H1 (cell line): ENCODE measurements at regions of chr5 and their contacts with region 1.

Region 1: GRCh38 chr5:177022384-177023308 is at the start of gene ZNF346:
- DNase-seq: peak; percentile 70 to 93
- H3K4me3 ChIP-seq: peak within 1 kb of the TSS; percentile 49 to 75 (median 74)
- H3K27ac ChIP-seq: peak within 1 kb of the TSS; percentile 13; the same call in 1 of the 2 replicates
- H3K4me1 ChIP-seq: peaks cover 0 to 4% (median 0%) of the 10 kb centered on the region in 4 experiments; a peak in 3 of 7 replicates
- H3K27me3 ChIP-seq: no peaks in the 10 kb centered on the region
- CTCF ChIP-seq: peak; percentile 55 to 66 (median 64)
- EP300 ChIP-seq: no peak
- POLR2A ChIP-seq: peak in 1 of 2 experiments; percentile 87; a peak in 2 of 3 replicates
- RAD21 ChIP-seq: peak; percentile 1 to 32; a peak in 1 of 4 replicates
- total RNA-seq, gene ZNF346: 19.9 and 20.2 TPM in 2 replicates

Region 2: DNA sequence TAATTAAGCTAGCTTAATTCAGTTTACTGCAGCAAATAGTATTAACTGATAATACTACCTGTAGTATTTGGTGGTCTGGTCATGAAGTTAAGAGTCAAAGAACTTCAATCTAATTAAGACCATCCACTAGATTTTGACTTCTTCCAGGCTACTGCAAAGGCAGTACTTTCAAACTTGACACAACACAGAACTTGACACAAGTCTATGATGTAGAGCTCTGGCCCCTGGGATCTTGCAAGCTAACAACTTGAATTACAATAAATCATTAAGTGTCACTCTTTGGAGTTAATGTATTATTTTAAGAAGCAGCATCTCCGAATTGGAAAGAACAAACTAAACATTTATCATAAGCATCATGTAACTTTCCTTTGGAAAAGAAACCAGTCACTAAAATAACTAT is 57.0 kb before region 1 on chr5:
- CTCF ChIA-PET with region 1: no interaction called
- POLR2A ChIA-PET with region 1: no interaction called
- DNase-seq: no peak
- H3K4me3 ChIP-seq: no peak overlapping the region
- H3K27ac ChIP-seq: no peak overlapping the region
- H3K4me1 ChIP-seq: no peaks in the 10 kb centered on the region
- H3K27me3 ChIP-seq: no peaks in the 10 kb centered on the region
- CTCF ChIP-seq: no peak
- EP300 ChIP-seq: no peak
- POLR2A ChIP-seq: no peak
- RAD21 ChIP-seq: no peak

Region 3: DNA sequence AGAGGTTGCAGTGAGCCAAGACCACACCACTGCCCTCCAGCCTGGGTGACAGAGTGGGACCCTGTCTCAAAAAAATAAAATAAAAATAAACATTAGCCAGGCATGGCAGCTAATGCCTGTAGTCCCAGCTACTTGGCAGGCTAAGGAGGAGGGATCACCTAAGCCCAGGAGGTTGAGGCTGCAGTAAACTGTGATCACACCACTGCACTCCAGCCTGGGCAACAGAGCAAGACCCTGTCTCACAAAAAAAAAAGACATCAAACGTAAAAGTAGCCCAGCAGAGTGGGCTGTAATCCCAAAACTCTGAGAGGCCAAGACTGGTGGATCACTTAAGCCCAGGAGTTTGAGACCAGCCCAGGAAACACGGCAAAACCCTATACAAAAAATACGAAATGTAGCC is 35.1 kb before region 1 on chr5:
- CTCF ChIA-PET with region 1: no interaction called
- POLR2A ChIA-PET with region 1: no interaction called
- DNase-seq: no peak
- H3K4me3 ChIP-seq: no peak overlapping the region
- H3K27ac ChIP-seq: no peak overlapping the region
- H3K4me1 ChIP-seq: no peaks in the 10 kb centered on the region
- H3K27me3 ChIP-seq: no peaks in the 10 kb centered on the region
- CTCF ChIP-seq: no peak
- EP300 ChIP-seq: no peak
- POLR2A ChIP-seq: no peak
- RAD21 ChIP-seq: no peak

Region 4: GRCh38 chr5:177043958-177044357 is 21.3 kb after region 1 on chr5:
- CTCF ChIA-PET with region 1: interaction called, 10 read pairs
- POLR2A ChIA-PET with region 1: no interaction called
- DNase-seq: no peak
- H3K4me3 ChIP-seq: no peak overlapping the region
- H3K27ac ChIP-seq: no peak overlapping the region
- H3K4me1 ChIP-seq: no peaks in the 10 kb centered on the region
- H3K27me3 ChIP-seq: no peaks in the 10 kb centered on the region
- CTCF ChIP-seq: no peak
- EP300 ChIP-seq: no peak
- POLR2A ChIP-seq: no peak
- RAD21 ChIP-seq: no peak

Region 5: GRCh38 chr5:177271113-177271512 is 248.5 kb after region 1 on chr5:
- CTCF ChIA-PET with region 1: no interaction called
- POLR2A ChIA-PET with region 1: no interaction called
- DNase-seq: no peak
- H3K4me3 ChIP-seq: no peak overlapping the region
- H3K27ac ChIP-seq: no peak overlapping the region
- H3K4me1 ChIP-seq: no peaks in the 10 kb centered on the region
- H3K27me3 ChIP-seq: no peaks in the 10 kb centered on the region
- CTCF ChIP-seq: no peak
- EP300 ChIP-seq: no peak
- POLR2A ChIP-seq: no peak
- RAD21 ChIP-seq: no peak

Region 6: GRCh38 chr5:177568326-177568725 is 545.7 kb after region 1 on chr5:
- CTCF ChIA-PET with region 1: no interaction called
- POLR2A ChIA-PET with region 1: no interaction called
- DNase-seq: no peak
- H3K4me3 ChIP-seq: no peak overlapping the region
- H3K27ac ChIP-seq: no peak overlapping the region
- H3K4me1 ChIP-seq: no peaks in the 10 kb centered on the region
- H3K27me3 ChIP-seq: no peaks in the 10 kb centered on the region
- CTCF ChIP-seq: no peak
- EP300 ChIP-seq: no peak
- POLR2A ChIP-seq: no peak
- RAD21 ChIP-seq: no peak